HCT116 (cell line): ENCODE measurements at regions of chr2 and their contacts with region 1.

Region 1: DNA sequence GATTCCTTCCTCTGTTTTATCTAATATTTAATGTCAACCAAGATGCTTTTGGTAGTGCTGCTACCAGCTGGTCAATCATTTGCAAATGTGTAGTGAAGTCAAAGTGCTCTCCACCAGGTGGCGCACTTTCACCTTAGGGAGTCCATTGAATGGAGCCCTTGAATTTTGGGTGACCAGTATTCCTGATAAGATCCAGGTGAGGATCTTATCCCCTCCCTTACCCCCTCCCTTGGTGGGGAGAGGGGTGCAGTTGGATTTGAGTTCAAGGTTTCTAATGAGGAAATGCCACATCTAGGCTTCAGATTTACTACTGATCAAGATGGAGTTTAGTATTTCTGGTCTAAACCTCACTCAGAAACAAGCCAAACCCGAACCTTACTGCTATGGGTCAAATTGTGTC is 12.0 kb upstream of the E2F6 start:
- DNase-seq: peak; percentile 76
- ATAC-seq: peak; percentile 70
- H3K4me3 ChIP-seq: no peak overlapping the region
- H3K27ac ChIP-seq: no peak overlapping the region
- H3K4me1 ChIP-seq: peaks cover 0 to 1% of the 10 kb centered on the region in 2 experiments; a peak in 1 of 4 replicates
- H3K27me3 ChIP-seq: no peaks in the 10 kb centered on the region
- CTCF ChIP-seq: peak; percentile 74 to 96 (median 91)
- POLR2A ChIP-seq: no peak
- RAD21 ChIP-seq: peak; percentile 92

Region 2: GRCh38 chr2:11370377-11371091 is 107.5 kb before region 1 on chr2:
- CTCF ChIA-PET with region 1: no interaction called
- POLR2A ChIA-PET with region 1: no interaction called
- RAD21 ChIA-PET with region 1: no interaction called
- intact Hi-C with region 1: no loop called
- DNase-seq: no peak
- ATAC-seq: no peak
- H3K4me3 ChIP-seq: no peak overlapping the region
- H3K27ac ChIP-seq: no peak overlapping the region
- H3K4me1 ChIP-seq: peaks cover 22 to 33% of the 10 kb centered on the region in 2 experiments
- H3K27me3 ChIP-seq: no peaks in the 10 kb centered on the region
- CTCF ChIP-seq: no peak
- POLR2A ChIP-seq: no peak
- RAD21 ChIP-seq: no peak

Region 3: GRCh38 chr2:11681722-11682589 is 204.0 kb after region 1 on chr2:
- CTCF ChIA-PET with region 1: no interaction called
- POLR2A ChIA-PET with region 1: no interaction called
- RAD21 ChIA-PET with region 1: no interaction called
- intact Hi-C with region 1: loop called (anchors 2 kb)
- DNase-seq: peak; percentile 19
- ATAC-seq: peak; percentile 90
- H3K4me3 ChIP-seq: no peak overlapping the region
- H3K27ac ChIP-seq: no peak overlapping the region
- H3K4me1 ChIP-seq: peaks cover 9 to 12% of the 10 kb centered on the region in 2 experiments; a peak in 2 of 4 replicates
- H3K27me3 ChIP-seq: no peaks in the 10 kb centered on the region
- CTCF ChIP-seq: peak; percentile 70 to 99 (median 99)
- POLR2A ChIP-seq: no peak
- RAD21 ChIP-seq: peak; percentile 83